Esophagus muscularis mucosa (tissue), 4 donors: ENCODE measurements at regions of chr7 and their contacts with region 1.

Region 1: GRCh38 chr7:23298885-23299769 is at the start of gene MALSU1:
- DNase-seq: peak; percentile 99
- H3K4me3 ChIP-seq: peak within 1 kb of the TSS; percentile 77 to 97 (median 84)
- H3K27ac ChIP-seq: peak within 1 kb of the TSS; percentile 79 to 89 (median 86)
- H3K4me1 ChIP-seq: peaks cover 28 to 58% (median 54%) of the 10 kb centered on the region in 4 donors
- H3K27me3 ChIP-seq: peaks cover 0 to 9% (median 0%) of the 10 kb centered on the region in 4 donors
- CTCF ChIP-seq: no peak
- EP300 ChIP-seq: no peak
- POLR2A ChIP-seq: peak; percentile 59
- total RNA-seq, gene MALSU1: 39.0 to 74.2 (median 63.3) TPM

Region 2: GRCh38 chr7:22833113-22833855 is 465.8 kb before region 1 on chr7:
- intact Hi-C with region 1: no loop called
- DNase-seq: no peak
- H3K4me3 ChIP-seq: no peak overlapping the region
- H3K27ac ChIP-seq: peak overlapping the region in 2 of 4 donors; percentile 31 to 62
- H3K4me1 ChIP-seq: peaks cover 6 to 16% (median 13%) of the 10 kb centered on the region in 4 donors
- H3K27me3 ChIP-seq: no peaks in the 10 kb centered on the region
- CTCF ChIP-seq: no peak
- EP300 ChIP-seq: no peak
- POLR2A ChIP-seq: no peak

Region 3: GRCh38 chr7:23494009-23494408 is 194.9 kb after region 1 on chr7:
- intact Hi-C with region 1: no loop called
- DNase-seq: no peak
- H3K4me3 ChIP-seq: no peak overlapping the region
- H3K27ac ChIP-seq: no peak overlapping the region
- H3K4me1 ChIP-seq: peaks cover 0 to 8% (median 7%) of the 10 kb centered on the region in 4 donors
- H3K27me3 ChIP-seq: no peaks in the 10 kb centered on the region
- CTCF ChIP-seq: no peak
- EP300 ChIP-seq: no peak
- POLR2A ChIP-seq: no peak

Region 4: DNA sequence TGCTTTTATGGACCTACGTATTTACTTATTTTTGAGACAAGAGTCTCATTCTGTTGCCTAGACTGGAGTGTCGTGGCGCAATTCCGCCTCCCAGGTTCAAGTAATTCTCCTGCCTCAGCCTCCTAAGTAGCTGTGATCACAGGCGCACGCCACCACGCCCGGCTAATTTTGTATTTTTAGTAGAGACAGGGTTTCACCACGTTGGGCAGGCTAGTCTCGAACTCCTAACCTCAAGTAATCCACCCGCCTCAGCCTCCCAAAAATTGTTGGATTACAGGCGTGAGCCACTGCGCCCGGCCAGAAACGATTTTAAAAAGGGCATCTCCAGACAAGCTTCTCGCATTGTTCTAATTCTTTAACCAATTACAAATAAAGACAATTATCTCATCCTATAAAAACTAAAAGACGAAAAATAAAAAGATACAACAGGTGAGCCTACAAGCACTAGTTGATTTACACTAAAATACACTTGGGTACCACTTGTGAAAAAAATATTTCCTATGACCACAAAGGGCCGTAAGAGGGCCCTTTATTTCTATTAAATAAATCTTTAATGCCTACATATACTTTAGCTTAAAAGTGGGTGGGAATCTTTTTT is 230.2 kb after region 1 on chr7:
- intact Hi-C with region 1: loop called (anchors 5 kb)
- DNase-seq: peak; percentile 83
- H3K4me3 ChIP-seq: peak overlapping the region in 2 of 4 donors; percentile 94 to 99
- H3K27ac ChIP-seq: peak overlapping the region in 2 of 4 donors; percentile 98 to 99
- H3K4me1 ChIP-seq: peaks cover 34 to 67% (median 64%) of the 10 kb centered on the region in 4 donors
- H3K27me3 ChIP-seq: no peaks in the 10 kb centered on the region
- CTCF ChIP-seq: no peak
- EP300 ChIP-seq: no peak
- POLR2A ChIP-seq: no peak